ENCODE measurements at regions of chr1 and their contacts with region 1.

Region 1: DNA sequence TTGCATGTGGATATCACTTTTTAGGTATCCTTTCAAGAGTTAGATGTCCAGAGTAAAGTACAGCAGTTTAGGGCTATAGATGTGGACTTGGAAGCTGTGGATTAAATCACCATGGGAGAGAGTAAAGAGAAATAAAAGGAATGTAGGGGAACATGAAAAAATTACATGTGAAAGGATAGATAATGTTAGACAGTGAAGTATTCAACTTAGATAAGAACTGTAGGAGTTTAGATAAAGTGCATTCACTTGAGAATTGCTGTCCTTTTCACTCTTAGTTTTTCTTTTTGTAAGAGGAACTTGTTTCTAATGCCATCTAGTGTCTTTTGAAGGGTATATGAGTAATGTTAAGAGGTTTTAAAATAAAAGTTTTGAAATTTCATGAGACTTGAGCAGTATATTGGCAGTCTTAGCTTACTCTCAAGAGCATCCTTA is 40.1 kb downstream of the MAST2 start:
- DNase-seq: no peak
- H3K4me3 Mint-ChIP-seq: peak overlapping the region; percentile 1
- H3K27ac Mint-ChIP-seq: peak overlapping the region; percentile 70
- H3K4me1 Mint-ChIP-seq: peaks cover 14% of the 10 kb centered on the region
- H3K27me3 Mint-ChIP-seq: no peaks in the 10 kb centered on the region

Region 2: GRCh38 chr1:45033356-45033755 is 810.1 kb before region 1 on chr1:
- intact Hi-C with region 1: no loop called
- DNase-seq: no peak
- H3K4me3 Mint-ChIP-seq: no peak overlapping the region
- H3K27ac Mint-ChIP-seq: no peak overlapping the region
- H3K4me1 Mint-ChIP-seq: peaks cover 10% of the 10 kb centered on the region
- H3K27me3 Mint-ChIP-seq: peaks cover 2% of the 10 kb centered on the region

Region 3: DNA sequence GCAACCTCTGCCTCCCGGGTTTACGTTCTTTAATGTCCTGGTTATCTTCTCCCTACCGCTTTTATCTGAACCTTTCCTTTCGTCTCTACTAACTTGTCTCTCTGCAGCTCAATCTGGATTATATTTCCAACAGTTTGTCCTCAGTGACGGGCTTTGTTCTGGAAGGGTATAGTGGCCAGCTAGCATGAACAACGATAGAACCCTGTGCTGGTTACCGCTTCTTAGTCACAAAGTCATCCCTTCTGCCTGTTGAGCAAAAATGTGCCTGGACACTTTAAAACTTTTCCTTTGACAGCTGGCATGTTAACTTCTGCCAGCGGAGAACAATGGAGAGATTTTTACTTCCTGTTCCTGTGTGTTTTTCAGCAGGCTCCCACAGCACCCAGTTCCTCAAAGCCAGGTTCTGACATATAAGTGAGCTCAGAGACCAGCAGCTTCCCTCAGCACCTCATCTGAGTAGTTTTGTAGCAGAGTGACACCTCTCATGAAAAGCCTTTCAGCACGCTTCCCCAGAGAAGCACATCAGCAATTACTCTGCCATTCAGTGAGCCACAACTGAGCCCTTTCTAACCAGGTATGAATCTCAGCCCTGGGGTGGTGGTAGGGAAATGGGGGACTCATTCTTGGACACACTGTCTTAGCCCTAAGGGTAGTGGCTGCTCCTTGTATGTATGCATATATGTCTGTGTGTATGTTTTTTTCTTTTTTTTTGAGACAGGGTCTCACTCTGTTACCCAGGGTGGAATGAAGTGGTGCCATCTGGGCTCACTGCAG is 196.1 kb before region 1 on chr1:
- intact Hi-C with region 1: loop called (anchors 5 kb)
- DNase-seq: no peak
- H3K4me3 Mint-ChIP-seq: no peak overlapping the region
- H3K27ac Mint-ChIP-seq: no peak overlapping the region
- H3K4me1 Mint-ChIP-seq: no peaks in the 10 kb centered on the region
- H3K27me3 Mint-ChIP-seq: no peaks in the 10 kb centered on the region

Region 4: GRCh38 chr1:45750298-45751038 is 93.0 kb before region 1 on chr1 and contains the start of gene IPP:
- intact Hi-C with region 1: loop called (anchors 2 kb)
- DNase-seq: peak; percentile 96
- H3K4me3 Mint-ChIP-seq: peak within 1 kb of the TSS; percentile 98
- H3K27ac Mint-ChIP-seq: peak within 1 kb of the TSS; percentile 96
- H3K4me1 Mint-ChIP-seq: peaks cover 10% of the 10 kb centered on the region
- H3K27me3 Mint-ChIP-seq: no peaks in the 10 kb centered on the region
- total RNA-seq, gene IPP: 12.3 and 13.9 TPM in 2 replicates

Region 5: DNA sequence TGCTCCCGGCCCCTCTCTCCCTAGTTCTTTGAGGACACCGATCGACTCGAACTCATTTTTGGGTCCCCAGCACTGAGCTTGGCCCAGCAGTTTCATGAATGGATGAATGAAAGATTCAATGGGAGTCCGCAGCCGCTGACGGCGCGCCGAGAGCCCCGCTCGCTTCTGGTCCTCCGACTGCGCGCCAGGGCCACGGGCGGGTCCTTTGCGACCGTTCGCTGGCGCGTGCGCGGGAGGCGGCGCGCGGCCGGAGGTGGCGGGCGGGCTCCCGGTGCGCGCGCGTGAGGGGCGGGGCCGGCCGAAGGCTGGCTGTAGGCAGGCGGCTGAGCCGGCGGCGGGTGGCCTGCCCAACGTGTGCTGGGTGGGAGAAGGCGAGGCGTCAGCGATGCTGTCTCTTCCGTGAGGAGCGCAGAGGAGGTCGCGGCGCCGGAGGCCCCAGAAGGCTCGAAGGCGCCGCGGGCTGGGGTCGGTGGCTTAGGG is 40.1 kb before region 1 on chr1 and contains the start of gene MAST2:
- intact Hi-C with region 1: loop called (anchors 2 kb)
- DNase-seq: peak; percentile 87
- H3K4me3 Mint-ChIP-seq: peak within 1 kb of the TSS; percentile 99
- H3K27ac Mint-ChIP-seq: peak within 1 kb of the TSS; percentile 93
- H3K4me1 Mint-ChIP-seq: peaks cover 32% of the 10 kb centered on the region
- H3K27me3 Mint-ChIP-seq: no peaks in the 10 kb centered on the region
- total RNA-seq, gene MAST2: 32.0 and 37.2 TPM in 2 replicates

Region 6: GRCh38 chr1:45863218-45863617 is 19.7 kb after region 1 on chr1:
- intact Hi-C with region 1: loop called (anchors 2 kb)
- DNase-seq: no peak
- H3K4me3 Mint-ChIP-seq: no peak overlapping the region
- H3K27ac Mint-ChIP-seq: peak overlapping the region; percentile 76
- H3K4me1 Mint-ChIP-seq: peaks cover 44% of the 10 kb centered on the region
- H3K27me3 Mint-ChIP-seq: no peaks in the 10 kb centered on the region

Region 7: DNA sequence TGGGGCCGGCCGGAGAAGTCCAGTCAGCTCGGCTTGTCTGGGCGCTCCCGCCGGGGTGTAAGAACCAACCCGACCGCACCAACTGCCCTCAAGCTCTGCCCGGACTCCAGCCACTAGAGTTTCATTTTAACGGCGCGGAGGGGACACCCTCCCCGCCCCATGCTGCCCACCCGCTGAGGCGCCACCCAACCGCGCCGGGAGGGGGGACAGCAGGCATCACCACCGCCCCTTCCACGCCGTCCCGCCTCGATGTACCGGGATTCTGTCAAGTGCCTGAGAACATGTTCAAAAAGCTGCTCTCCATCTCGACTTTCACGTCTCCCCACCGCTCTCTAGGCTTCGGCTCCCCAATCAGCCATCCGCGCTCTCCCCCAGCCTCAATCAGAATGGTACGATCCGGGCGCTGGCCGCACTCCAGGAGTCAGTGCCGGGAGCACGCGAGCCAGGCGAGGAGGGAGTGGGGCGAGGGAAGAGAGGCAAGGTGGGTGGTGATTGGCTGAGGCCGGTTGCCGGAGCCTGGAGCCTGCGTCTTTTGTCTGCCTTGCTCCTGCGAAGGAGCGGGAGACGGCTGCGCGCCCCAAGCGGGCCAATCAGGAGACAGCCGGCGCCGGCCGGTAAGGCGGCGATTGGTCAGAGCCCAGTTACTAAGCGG is 289.2 kb after region 1 on chr1 and contains the start of gene PIK3R3:
- intact Hi-C with region 1: no loop called
- DNase-seq: peak; percentile 89
- H3K4me3 Mint-ChIP-seq: peak within 1 kb of the TSS; percentile 96
- H3K27ac Mint-ChIP-seq: peak within 1 kb of the TSS; percentile 98
- H3K4me1 Mint-ChIP-seq: peaks cover 42% of the 10 kb centered on the region
- H3K27me3 Mint-ChIP-seq: peaks cover 64% of the 10 kb centered on the region
- total RNA-seq, gene PIK3R3: 3.6 TPM in 2 replicates

Region 8: GRCh38 chr1:46303038-46303871 is 459.8 kb after region 1 on chr1 and contains the starts of genes LRRC41 and UQCRH:
- intact Hi-C with region 1: no loop called
- DNase-seq: peak; percentile 92
- H3K4me3 Mint-ChIP-seq: peak within 1 kb of the TSS; percentile 100
- H3K27ac Mint-ChIP-seq: peak within 1 kb of the TSS; percentile 99
- H3K4me1 Mint-ChIP-seq: peaks cover 35% of the 10 kb centered on the region
- H3K27me3 Mint-ChIP-seq: no peaks in the 10 kb centered on the region
- total RNA-seq, gene LRRC41: 62.1 and 62.6 TPM in 2 replicates
- total RNA-seq, gene UQCRH: 258 and 268 TPM in 2 replicates

Measured in activated T-helper 1 cell treated with anti-CD3 and anti-CD28 coated beads, Interleukin-12 subunit alpha, Interleukin-12 subunit beta, Interleukin-2, Interleukin-4 antibody, amounts not matched to agents 30 ng/mL and 10 ng/mL and 1 ng/mL, durations not matched to agents 14 hours and 24 hours and 36 hours (primary cell).